Left cardiac atrium (tissue), 4 donors: ENCODE measurements at regions of chr12 and their contacts with region 1.

Region 1: DNA sequence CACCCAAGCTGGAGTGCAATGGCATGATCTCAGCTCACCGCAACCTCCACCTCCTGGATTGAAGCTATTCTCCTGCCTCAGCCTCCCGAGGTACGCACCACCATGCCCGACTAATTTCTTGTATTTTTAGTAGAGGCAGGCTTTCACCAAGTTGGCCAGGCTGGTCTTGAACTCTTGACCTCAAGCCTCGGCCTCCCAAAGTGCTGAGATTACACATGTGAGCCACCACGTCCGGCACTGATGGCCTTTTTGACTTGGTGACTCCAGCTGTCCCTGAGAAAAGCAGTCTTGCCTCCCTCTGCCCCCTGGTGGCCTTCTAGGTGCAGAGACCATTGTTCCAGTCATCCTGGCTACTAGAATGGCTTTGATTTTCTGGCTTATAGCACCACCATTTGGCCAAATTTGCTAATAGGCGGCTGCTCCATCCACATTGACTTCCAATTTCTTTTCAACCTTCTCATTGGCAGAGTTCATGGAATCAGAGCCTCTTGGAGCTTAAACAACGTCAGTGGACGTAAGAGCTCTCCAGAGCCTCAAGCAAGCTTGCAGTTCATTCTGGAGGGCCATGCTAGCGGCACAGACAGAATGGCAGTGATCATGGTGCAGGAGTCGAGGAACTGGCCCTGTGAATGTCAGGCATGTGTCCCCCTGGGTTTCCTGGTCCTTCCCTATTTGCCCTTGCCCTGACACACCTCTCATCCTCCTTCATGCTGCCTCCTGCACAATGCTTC is 25.4 kb upstream of the EIF4B start:
- DNase-seq: peak; percentile 92
- ATAC-seq: peak; percentile 89 to 93

Region 2: GRCh38 chr12:52372216-52373154 is 608.4 kb before region 1 on chr12:
- intact Hi-C with region 1: loop called in 1 of 2 experiments (anchors 10 kb)
- DNase-seq: peak; percentile 87
- ATAC-seq: peak; percentile 83 to 88

Region 3: GRCh38 chr12:52884526-52885293 is 96.1 kb before region 1 on chr12:
- intact Hi-C with region 1: loop called (anchors 1 to 2 kb)
- DNase-seq: peak; percentile 82
- ATAC-seq: peak; percentile 83 to 85

Region 4: DNA sequence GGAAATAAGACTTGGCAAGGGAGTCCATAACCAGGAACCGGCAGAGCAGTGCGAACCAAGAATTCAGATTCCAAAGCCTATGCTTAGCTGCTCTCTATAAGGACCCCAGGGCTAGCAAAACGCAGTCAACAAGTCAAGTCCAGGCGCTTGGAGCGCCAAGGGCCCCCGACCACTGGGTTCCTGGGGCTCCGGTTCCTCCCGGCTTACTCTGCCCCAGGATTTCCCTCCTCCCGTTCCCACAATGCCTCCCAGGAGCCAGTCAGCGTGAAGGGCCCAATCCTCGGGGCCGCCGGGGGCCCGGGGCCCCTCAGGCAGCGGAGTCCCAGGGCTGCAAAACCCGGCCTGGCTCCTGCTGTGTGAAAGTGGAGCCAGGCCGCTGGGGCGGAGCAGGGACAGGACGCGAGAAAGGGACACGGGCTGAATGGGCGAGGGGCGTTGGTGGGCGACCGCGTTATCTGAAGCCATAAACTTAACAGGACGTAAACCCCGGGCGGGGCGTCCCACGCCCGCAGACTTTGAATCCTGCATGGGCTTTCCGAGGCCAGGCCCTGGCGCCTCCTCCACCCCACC is 77.5 kb before region 1 on chr12:
- intact Hi-C with region 1: loop called in 1 of 2 experiments (anchors 5 kb)
- DNase-seq: peak; percentile 80
- ATAC-seq: peak; percentile 68 to 94

Region 5: DNA sequence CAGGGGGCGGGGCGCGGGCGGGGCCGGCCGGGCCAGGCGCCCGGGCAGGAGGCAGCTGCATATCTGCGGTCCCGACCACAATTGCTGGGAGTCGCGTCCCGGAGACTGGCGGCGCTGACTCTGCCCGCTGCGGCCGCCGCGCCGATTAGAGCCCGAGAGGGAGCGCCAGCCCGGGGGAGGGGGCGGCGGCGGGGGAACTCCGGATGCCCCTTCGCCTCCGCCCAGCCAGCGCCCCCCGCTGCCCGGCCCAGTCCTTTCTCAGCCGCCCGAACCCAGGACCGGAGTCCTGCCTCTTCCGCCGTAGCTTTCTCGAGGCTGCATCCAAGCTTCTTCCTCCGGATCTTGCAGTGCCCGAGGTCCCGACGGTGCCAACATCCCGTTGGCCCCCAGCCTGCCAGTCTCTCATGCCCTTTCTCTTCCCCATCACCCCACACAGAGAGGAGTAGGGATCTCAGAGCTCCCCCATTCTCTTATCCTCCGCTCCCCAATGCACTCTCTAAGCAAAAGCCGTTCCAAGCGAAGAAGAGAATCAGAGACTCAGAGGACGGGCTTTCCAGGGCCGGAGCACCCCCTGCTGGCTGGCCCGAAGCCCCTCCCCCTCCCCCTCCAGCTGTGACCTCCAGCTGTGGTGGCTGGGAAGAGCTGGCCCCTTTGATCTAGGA is 364.1 kb after region 1 on chr12:
- intact Hi-C with region 1: no loop called
- DNase-seq: peak; percentile 80
- ATAC-seq: peak; percentile 93 to 94